HepG2 (cell line): ENCODE measurements at regions of chr5 and their contacts with region 1.

Region 1: DNA sequence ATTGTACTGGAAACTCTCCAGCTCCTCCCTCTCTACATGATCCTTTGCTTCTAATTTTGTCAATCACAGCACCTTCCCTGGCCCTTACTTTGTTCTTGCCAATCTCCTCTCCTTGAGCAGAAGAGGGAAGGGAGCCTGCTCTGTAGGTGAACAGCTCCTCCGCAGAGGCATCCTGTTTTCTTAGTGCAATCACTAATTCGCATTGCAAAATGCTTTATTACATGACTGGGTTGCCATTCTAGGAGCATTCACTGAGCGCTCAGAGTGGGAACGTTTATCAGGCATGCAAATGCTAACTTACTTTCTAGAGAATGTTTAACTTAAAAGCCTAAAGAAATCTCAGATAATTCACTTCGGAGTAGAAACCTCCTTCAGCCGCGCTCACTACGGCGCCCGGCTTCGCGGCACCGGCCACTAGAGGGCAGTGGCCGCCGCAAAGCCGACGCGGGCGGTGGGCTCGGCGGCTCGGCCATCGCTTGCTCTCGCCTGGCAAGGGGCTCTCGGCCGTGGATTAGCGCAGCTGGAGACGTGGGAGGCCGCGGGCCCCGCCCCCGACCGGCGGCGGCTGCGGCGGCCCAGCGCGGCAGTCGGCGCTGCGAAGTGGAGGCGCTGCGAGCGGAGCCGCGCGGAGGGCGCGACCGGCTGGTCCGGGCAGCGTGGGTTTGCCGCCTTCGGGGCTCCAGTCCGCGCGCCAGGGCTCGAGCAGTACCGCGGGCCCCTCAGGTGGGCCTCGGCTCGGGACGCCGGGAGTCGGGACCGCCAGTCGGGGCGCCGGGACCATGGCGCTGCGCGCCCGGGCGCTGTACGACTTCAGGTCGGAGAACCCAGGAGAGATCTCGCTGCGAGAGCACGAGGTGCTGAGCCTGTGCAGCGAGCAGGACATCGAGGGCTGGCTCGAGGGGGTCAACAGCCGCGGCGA is at the start of gene SNX18:
- DNase-seq: peak; percentile 79
- ATAC-seq: peak; percentile 90
- H3K4me3 ChIP-seq: peak within 1 kb of the TSS; percentile 60 to 84 (median 82)
- H3K27ac ChIP-seq: peak within 1 kb of the TSS; percentile 66
- H3K4me1 ChIP-seq: peaks cover 41% of the 10 kb centered on the region
- H3K27me3 ChIP-seq: no peaks in the 10 kb centered on the region
- CTCF ChIP-seq: peak; percentile 92
- EP300 ChIP-seq: peak in 1 of 2 experiments; percentile 14; a peak in 1 of 4 replicates
- POLR2A ChIP-seq: peak; percentile 36 to 63; a peak in 3 of 4 replicates
- RAD21 ChIP-seq: peak; percentile 99
- total RNA-seq, gene SNX18: 6.0 and 6.2 TPM in 2 replicates

Region 2: GRCh38 chr5:54619731-54620547 is 102.5 kb after region 1 on chr5:
- CTCF ChIA-PET with region 1: no interaction called
- POLR2A ChIA-PET with region 1: no interaction called
- in situ Hi-C with region 1: no loop called
- intact Hi-C with region 1: loop called (anchors 10 kb)
- DNase-seq: no peak
- ATAC-seq: no peak; the same call in 2 of the 3 replicates
- H3K4me3 ChIP-seq: no peak overlapping the region
- H3K27ac ChIP-seq: no peak overlapping the region
- H3K4me1 ChIP-seq: no peaks in the 10 kb centered on the region
- H3K27me3 ChIP-seq: no peaks in the 10 kb centered on the region
- CTCF ChIP-seq: no peak
- EP300 ChIP-seq: no peak
- POLR2A ChIP-seq: no peak
- RAD21 ChIP-seq: no peak

Region 3: DNA sequence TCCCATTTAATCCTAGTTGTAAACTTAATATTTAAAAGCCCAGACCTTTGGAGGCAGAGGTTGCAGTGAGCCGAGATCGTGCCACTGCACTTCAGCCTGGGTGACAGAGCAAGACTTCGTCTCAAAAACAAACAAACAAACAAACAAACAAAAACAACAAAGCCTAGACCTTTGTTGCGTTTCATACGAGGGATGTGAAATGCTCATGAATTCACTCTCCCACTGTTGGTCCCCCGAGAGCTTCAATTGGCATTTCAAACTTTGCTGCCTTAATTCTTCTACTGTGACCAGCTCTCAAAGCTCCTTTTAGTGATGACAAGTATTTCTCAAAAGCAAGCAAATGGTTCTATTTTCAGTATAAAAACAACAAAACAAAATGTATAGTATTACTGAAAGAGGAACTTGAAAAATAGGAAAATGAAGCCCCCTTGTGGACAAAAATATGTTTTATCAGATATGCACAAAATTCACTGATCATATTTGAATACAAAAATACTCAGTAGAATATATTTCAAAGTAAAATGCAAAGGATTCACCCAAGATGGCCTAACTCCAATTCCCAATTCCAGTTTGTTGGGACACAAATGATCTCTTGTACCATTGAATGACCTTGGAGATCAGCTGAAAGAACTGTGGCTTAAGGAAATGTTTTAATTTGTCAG is 327.6 kb after region 1 on chr5:
- CTCF ChIA-PET with region 1: interaction called, 25 read pairs
- POLR2A ChIA-PET with region 1: no interaction called
- in situ Hi-C with region 1: loop called (anchors 5 kb)
- intact Hi-C with region 1: loop called (anchors 1 kb)
- DNase-seq: peak; percentile 8
- ATAC-seq: no peak
- H3K4me3 ChIP-seq: no peak overlapping the region
- H3K27ac ChIP-seq: no peak overlapping the region
- H3K4me1 ChIP-seq: no peaks in the 10 kb centered on the region
- H3K27me3 ChIP-seq: no peaks in the 10 kb centered on the region; a peak in 1 of 5 replicates
- CTCF ChIP-seq: peak; percentile 35
- EP300 ChIP-seq: no peak
- POLR2A ChIP-seq: no peak
- RAD21 ChIP-seq: no peak

Region 4: DNA sequence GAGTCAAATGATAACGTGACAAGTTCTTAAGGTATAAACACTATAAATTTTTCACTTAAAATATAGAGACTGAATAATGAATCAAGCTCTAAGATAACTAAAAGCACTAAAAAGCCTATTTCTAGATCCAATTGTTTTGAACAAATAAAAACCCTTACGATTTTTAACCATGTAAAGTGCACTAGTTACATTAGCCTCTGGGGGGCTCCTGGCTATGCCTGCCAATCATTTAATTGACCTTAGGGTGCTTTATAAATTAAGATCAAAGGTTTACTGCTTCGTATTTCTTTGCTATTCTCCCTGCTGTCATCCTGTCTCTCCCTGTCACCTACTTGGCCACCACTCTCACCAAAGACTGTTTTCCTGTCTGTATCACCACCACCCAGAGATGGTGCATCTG is 334.6 kb after region 1 on chr5:
- CTCF ChIA-PET with region 1: no interaction called
- POLR2A ChIA-PET with region 1: no interaction called
- in situ Hi-C with region 1: loop called (anchors 5 kb)
- intact Hi-C with region 1: no loop called
- DNase-seq: no peak
- ATAC-seq: no peak
- H3K4me3 ChIP-seq: no peak overlapping the region
- H3K27ac ChIP-seq: no peak overlapping the region
- H3K4me1 ChIP-seq: no peaks in the 10 kb centered on the region
- H3K27me3 ChIP-seq: no peaks in the 10 kb centered on the region; a peak in 1 of 5 replicates
- CTCF ChIP-seq: no peak
- EP300 ChIP-seq: no peak
- POLR2A ChIP-seq: no peak
- RAD21 ChIP-seq: no peak

Region 5: DNA sequence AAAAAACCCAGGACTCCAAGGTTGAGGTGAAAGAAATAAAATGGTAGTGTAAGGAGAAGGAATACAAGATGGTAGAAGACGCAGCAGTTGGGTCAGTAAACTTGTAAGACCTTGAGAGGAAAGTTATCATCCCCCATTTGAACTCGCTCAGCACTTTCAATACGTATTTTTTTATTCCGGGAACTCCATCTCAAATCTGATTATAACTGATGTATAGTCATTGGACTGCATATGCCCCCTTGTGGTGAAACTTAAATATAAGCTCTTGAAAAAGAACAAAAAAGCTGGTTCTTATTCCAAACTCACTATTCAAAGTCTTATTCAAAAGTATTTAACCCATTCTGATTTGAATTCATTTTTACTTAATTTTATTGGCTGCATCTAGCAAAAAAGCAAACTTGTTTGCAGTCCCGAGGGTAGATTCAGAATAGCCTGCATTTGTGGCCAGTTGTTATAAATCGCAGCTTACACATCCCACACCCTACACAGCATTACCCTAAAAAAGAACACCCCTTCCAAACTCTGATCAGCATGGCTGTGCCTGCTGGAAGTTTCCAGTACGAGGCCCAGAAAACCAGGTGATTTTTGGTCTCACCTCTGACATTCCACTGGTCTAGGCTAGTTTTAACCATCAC is 350.0 kb after region 1 on chr5:
- CTCF ChIA-PET with region 1: interaction called, 13 read pairs
- POLR2A ChIA-PET with region 1: no interaction called
- in situ Hi-C with region 1: no loop called
- intact Hi-C with region 1: loop called (anchors 1 kb)
- DNase-seq: peak; percentile 22
- ATAC-seq: no peak
- H3K4me3 ChIP-seq: no peak overlapping the region
- H3K27ac ChIP-seq: no peak overlapping the region
- H3K4me1 ChIP-seq: no peaks in the 10 kb centered on the region
- H3K27me3 ChIP-seq: peaks cover 0 to 4% of the 10 kb centered on the region in 2 experiments; a peak in 1 of 5 replicates
- CTCF ChIP-seq: no peak; the same call in 1 of the 2 replicates
- EP300 ChIP-seq: no peak
- POLR2A ChIP-seq: no peak
- RAD21 ChIP-seq: no peak

Region 6: DNA sequence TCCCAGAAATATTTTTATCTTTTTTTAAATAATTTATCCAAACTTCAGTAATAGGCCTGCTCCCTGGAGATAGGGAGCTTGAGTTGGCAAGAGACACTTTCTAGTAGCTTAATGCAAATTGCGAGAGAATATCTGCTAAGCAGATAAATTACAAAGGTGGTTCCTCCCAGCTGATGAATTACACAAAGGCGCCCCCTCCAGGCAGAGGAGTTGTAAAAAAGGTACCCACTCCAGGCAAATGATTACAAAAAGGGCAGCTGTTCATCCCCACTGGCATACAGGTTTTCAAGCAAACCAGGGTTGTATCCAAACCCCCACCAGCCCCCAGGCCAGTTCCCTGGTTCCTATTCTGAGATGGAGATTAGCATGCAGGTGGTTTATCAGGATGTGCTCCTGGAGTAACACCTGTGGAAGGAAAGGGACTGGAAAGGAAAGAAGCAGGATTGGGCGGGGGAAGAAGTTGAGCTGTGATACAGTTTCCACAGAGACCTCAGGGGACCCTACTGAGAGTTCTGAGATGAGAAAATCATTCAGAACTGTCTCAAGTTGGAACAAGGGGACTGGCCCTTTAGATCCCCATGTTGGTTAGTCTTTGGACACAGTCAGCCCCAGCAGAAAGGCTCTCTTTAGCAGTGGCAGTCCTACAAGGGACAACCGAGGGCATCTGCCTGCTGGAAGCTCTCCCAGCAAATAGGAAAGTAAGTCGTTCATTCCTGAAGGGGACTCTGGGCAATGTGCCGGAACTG is 442.4 kb after region 1 on chr5:
- CTCF ChIA-PET with region 1: no interaction called
- POLR2A ChIA-PET with region 1: no interaction called
- in situ Hi-C with region 1: no loop called
- intact Hi-C with region 1: no loop called
- DNase-seq: peak; percentile 5
- ATAC-seq: no peak
- H3K4me3 ChIP-seq: no peak overlapping the region
- H3K27ac ChIP-seq: no peak overlapping the region
- H3K4me1 ChIP-seq: no peaks in the 10 kb centered on the region
- H3K27me3 ChIP-seq: no peaks in the 10 kb centered on the region
- CTCF ChIP-seq: peak; percentile 25
- EP300 ChIP-seq: no peak
- POLR2A ChIP-seq: no peak
- RAD21 ChIP-seq: no peak

Region 7: GRCh38 chr5:55146543-55147151 is 629.2 kb after region 1 on chr5:
- CTCF ChIA-PET with region 1: interaction called, 6 read pairs
- POLR2A ChIA-PET with region 1: no interaction called
- in situ Hi-C with region 1: loop called (anchors 25 kb)
- intact Hi-C with region 1: loop called (anchors 10 kb)
- DNase-seq: peak; percentile 71
- ATAC-seq: peak; percentile 94
- H3K4me3 ChIP-seq: no peak overlapping the region
- H3K27ac ChIP-seq: no peak overlapping the region
- H3K4me1 ChIP-seq: no peaks in the 10 kb centered on the region
- H3K27me3 ChIP-seq: peaks cover 1 to 6% of the 10 kb centered on the region in 2 experiments; a peak in 2 of 5 replicates
- CTCF ChIP-seq: peak; percentile 91
- EP300 ChIP-seq: no peak
- POLR2A ChIP-seq: no peak
- RAD21 ChIP-seq: peak; percentile 79